ENCODE measurements at regions of chr13 and their contacts with region 1.

Region 1: DNA sequence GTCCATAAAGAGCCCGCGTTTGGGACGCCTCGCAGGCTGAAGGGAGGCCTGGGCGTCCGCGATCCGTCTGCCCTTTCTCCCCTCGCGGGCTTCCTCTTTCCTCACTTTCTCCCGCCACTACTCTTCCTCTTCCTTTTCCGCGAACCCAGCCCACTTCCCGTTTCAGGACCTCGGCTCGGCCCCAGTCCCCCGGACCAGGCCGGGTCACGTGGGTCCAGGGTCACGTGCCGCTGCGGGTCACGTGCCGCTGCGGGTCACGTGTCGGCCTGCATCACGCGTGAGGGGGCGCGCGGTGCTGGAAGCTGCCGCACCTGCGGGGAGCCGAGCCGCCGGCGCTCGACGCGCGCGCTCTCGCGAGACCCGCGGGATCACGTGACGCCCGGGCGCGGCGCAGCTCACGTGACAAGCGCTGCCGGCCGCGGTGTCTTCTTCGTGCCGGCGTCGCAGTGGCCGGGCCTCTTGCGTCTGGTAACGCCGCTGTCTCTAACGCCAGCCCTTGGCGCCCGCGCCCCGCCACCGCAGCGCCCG is at the start of gene LAMP1:
- DNase-seq: peak; percentile 86 to 98 (median 93)
- H3K4me3 ChIP-seq: peak within 1 kb of the TSS; percentile 71 to 99 (median 95)
- H3K27ac ChIP-seq: peak within 1 kb of the TSS; percentile 72 to 98 (median 93)
- H3K27me3 ChIP-seq: no peaks in the 10 kb centered on the region
- CTCF ChIP-seq: peak in 25 of 56 donors; percentile 9 to 61 (median 27)
- total RNA-seq, gene LAMP1: 87.9 to 281 (median 130) TPM

Region 2: GRCh38 chr13:113044391-113045114 is 252.4 kb before region 1 on chr13:
- intact Hi-C with region 1: loop called (anchors 5 kb)
- DNase-seq: peak; percentile 59 to 94 (median 92)
- H3K4me3 ChIP-seq: peak overlapping the region; percentile 41 to 85 (median 68)
- H3K27ac ChIP-seq: peak overlapping the region; percentile 16 to 98 (median 91)
- H3K27me3 ChIP-seq: no peaks in the 10 kb centered on the region
- CTCF ChIP-seq: peak in 17 of 56 donors; percentile 6 to 42 (median 18)

Region 3: GRCh38 chr13:113129921-113130750 is 166.8 kb before region 1 on chr13:
- intact Hi-C with region 1: no loop called
- DNase-seq: peak in 3 of 10 donors; percentile 1 to 36 (median 28)
- H3K4me3 ChIP-seq: peak overlapping the region in 24 of 59 donors; percentile 1 to 54 (median 30)
- H3K27ac ChIP-seq: no peak overlapping the region
- H3K27me3 ChIP-seq: peaks cover 0 to 7% (median 0%) of the 10 kb centered on the region in 45 donors
- CTCF ChIP-seq: no peak

Region 4: GRCh38 chr13:113153810-113154748 is 142.8 kb before region 1 on chr13:
- intact Hi-C with region 1: loop called in 1 of 2 experiments (anchors 5 kb)
- DNase-seq: peak; percentile 73 to 86 (median 82)
- H3K4me3 ChIP-seq: peak overlapping the region; percentile 24 to 74 (median 57)
- H3K27ac ChIP-seq: peak overlapping the region in 58 of 59 donors; percentile 6 to 90 (median 80)
- H3K27me3 ChIP-seq: no peaks in the 10 kb centered on the region
- CTCF ChIP-seq: peak in 7 of 56 donors; percentile 6 to 37 (median 13)

Region 5: DNA sequence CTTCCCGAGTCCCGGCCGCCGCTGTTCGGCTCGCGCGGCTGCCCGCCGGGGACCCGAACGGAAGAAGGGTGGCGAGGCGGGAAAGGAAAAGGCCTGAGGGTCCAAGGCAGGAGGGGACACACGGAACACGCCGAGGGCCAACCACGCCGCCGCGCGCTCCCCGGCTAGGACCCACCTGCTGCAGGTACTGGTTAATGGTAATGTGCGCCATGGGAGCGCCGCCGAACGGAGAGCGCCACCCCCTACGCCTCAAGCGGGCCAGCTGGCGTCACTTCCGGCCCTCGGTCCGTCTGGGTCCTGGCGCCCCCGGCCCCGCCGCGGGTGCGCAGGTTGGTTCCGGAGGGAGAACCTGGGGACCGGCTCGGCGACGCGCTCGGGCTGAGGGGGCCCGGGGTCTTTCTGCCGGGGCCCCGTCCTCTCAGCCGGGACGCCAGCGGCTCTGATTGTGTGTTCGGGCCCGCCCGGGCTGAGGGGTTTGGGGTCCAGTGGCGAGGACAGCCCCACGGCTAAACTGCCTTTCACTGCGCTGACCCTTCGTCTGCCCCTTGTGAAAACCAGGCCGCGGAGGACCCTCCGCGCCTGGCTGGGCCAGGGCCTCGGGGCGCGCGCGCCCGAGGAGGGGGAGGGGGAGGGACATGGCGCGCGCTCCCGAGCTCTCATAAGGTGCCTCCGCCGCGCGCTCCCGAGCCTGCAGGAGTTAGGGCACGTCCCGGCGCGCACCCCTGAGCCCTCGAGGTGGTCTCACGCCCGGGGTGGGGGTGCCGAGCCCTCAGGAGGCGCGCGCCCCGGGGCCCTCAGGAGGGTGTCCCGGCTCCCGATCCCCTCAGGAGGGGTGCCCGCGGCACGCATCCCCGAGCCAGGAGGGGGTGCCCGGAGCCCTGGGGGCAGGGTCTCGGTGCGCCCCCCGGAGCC is 88.2 kb before region 1 on chr13 and contains the start of gene PCID2:
- intact Hi-C with region 1: loop called (anchors 2 kb)
- DNase-seq: peak; percentile 75 to 95 (median 85)
- H3K4me3 ChIP-seq: peak within 1 kb of the TSS; percentile 68 to 100 (median 94)
- H3K27ac ChIP-seq: peak within 1 kb of the TSS; percentile 88 to 100 (median 98)
- H3K27me3 ChIP-seq: no peaks in the 10 kb centered on the region
- CTCF ChIP-seq: peak in 47 of 56 donors; percentile 7 to 63 (median 39)
- total RNA-seq, gene PCID2: 32.8 to 106 (median 48.0) TPM

Region 6: GRCh38 chr13:113393563-113394338 is 96.8 kb after region 1 on chr13:
- intact Hi-C with region 1: loop called in 1 of 2 experiments (anchors 10 kb)
- DNase-seq: peak; percentile 51 to 87 (median 73)
- H3K4me3 ChIP-seq: peak overlapping the region; percentile 63 to 93 (median 79)
- H3K27ac ChIP-seq: peak overlapping the region in 35 of 59 donors; percentile 13 to 85 (median 58)
- H3K27me3 ChIP-seq: no peaks in the 10 kb centered on the region
- CTCF ChIP-seq: peak; percentile 32 to 98 (median 84)

Region 7: GRCh38 chr13:113452942-113453901 is 156.3 kb after region 1 on chr13 and contains the start of gene ADPRHL1:
- intact Hi-C with region 1: loop called in 1 of 2 experiments (anchors 5 kb)
- DNase-seq: peak in 1 of 10 donors; percentile 35
- H3K4me3 ChIP-seq: peak within 1 kb of the TSS in 16 of 59 donors; percentile 0 to 24 (median 11)
- H3K27ac ChIP-seq: peak within 1 kb of the TSS in 42 of 59 donors; percentile 0 to 77 (median 38)
- H3K27me3 ChIP-seq: no peaks in the 10 kb centered on the region
- CTCF ChIP-seq: no peak
- total RNA-seq, gene ADPRHL1: 5.4 to 26.4 (median 17.8) TPM

Region 8: DNA sequence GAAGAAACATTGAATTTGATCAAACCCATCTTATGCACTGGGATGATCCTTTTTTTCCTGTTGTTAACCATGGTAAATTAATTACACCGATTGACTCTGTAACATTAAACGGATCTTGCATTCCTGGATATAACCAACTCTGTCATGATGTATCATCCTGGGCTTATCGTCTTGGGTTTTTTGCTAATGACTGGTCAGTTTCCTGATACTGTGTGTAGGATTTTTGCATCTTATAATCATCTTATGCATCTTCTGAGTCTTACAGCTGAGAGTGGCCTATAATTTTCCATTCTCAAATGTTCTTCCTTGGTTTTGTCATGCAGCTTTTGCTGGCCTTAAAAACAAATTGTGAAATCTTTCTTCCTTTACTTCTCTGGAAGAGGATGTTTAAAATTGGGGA is 180.8 kb after region 1 on chr13:
- intact Hi-C with region 1: no loop called
- DNase-seq: no peak
- H3K4me3 ChIP-seq: no peak overlapping the region
- H3K27ac ChIP-seq: no peak overlapping the region
- H3K27me3 ChIP-seq: no peaks in the 10 kb centered on the region
- CTCF ChIP-seq: no peak

Region 9: GRCh38 chr13:113490496-113491417 is 193.9 kb after region 1 on chr13 and contains the start of gene DCUN1D2:
- intact Hi-C with region 1: loop called in 1 of 2 experiments (anchors 5 kb)
- DNase-seq: peak; percentile 82 to 97 (median 92)
- H3K4me3 ChIP-seq: peak within 1 kb of the TSS; percentile 68 to 100 (median 95)
- H3K27ac ChIP-seq: peak within 1 kb of the TSS; percentile 65 to 95 (median 88)
- H3K27me3 ChIP-seq: no peaks in the 10 kb centered on the region
- CTCF ChIP-seq: peak in 13 of 56 donors; percentile 3 to 44 (median 14)
- total RNA-seq, gene DCUN1D2: 27.6 to 95.6 (median 60.2) TPM

Region 10: DNA sequence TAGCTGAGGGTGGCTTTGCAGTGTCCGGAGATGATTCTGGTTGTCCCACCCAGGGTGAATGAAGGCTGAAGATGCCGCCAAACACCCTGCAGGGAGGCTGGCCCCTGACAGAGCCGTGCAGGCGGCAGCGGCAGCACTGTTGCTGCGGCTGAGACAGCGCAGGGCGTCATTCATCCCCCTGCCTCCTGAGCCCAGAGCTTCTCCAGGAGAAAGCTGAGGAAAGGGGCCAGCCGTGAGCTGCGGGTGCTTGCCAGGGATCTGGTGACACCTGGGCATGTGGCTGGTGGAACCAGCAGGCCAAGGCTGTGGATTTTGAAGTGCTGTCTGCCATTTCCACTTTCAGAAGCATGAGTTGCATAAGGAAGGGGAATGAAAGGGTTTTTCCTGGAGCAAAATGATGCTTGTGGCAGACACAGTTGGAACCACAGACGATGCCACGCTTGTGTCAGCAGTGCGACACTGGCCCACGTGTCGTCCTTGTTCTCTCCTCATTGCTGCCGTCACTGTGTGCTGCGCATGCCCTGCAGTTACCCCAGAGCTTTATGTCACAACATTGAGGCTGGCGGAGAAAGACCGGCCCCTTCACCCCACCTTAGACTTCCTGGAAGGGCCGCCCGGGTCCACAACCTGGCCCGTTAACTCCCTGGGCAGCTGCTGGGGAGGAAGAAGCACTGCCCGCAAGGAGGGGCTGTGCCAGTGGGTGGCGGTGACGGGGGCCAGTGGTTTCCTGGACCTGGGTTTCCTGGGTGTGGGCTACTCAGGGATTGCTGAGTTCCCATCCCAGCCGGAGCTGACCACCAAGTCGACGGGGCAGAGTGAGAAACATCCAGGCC is 310.4 kb after region 1 on chr13:
- intact Hi-C with region 1: no loop called
- DNase-seq: peak in 2 of 10 donors; percentile 34 to 61
- H3K4me3 ChIP-seq: no peak overlapping the region
- H3K27ac ChIP-seq: peak overlapping the region in 7 of 59 donors; percentile 4 to 65 (median 41)
- H3K27me3 ChIP-seq: no peaks in the 10 kb centered on the region
- CTCF ChIP-seq: no peak